OCI-LY7 (cell line): ENCODE measurements at regions of chr6 and their contacts with region 1.

Region 1: GRCh38 chr6:166460473-166461437 is 78.0 kb upstream of the MPC1 start:
- DNase-seq: peak; percentile 34
- H3K4me3 ChIP-seq: no peak overlapping the region
- H3K27ac ChIP-seq: no peak overlapping the region
- H3K4me1 ChIP-seq: peaks cover 33% of the 10 kb centered on the region
- CTCF ChIP-seq: no peak

Region 2: GRCh38 chr6:166586424-166587156 is 125.8 kb after region 1 on chr6 and contains the start of gene RAMACL:
- CTCF ChIA-PET with region 1: no interaction called
- POLR2A ChIA-PET with region 1: no interaction called
- intact Hi-C with region 1: loop called (anchors 5 kb)
- DNase-seq: peak; percentile 88
- H3K4me3 ChIP-seq: no peak within 1 kb of the TSS
- H3K27ac ChIP-seq: peak within 1 kb of the TSS; percentile 93
- H3K4me1 ChIP-seq: peaks cover 35% of the 10 kb centered on the region
- CTCF ChIP-seq: no peak
- total RNA-seq, gene RAMACL: 0.41 TPM in 1 of 2 replicates, not detected in the other